Esophagus muscularis mucosa (tissue), 4 donors: ENCODE measurements at regions of chr10 and their contacts with region 1.

Region 1: DNA sequence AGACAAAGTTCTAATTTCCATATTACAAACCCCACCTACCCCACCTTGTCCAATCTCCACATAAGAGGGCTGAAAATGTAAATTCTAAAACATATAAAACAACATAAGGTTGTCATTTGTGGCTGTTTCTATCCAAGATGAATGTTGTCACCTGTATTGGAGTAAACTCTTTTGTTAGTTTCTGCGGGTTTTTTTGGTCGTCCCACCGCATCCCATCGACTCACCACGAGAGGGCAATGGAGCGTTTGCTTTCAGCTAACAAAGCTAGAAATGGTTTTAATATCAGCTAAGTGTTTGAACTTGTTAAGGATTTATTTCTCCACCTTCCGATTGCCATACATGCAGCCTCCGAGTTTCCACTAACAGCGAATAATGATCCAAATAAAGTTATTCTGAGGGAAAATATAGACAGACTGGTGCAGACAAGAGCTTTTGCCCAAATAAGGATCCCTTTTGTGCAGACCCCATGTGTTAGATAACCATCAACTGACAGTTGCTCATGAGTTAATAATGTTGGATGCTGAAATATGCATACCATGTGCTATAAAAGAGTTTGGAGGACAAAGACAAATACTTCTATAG is 137.2 kb downstream of the ARID5B start:
- DNase-seq: no peak
- H3K4me3 ChIP-seq: peak overlapping the region; percentile 24 to 40 (median 34)
- H3K27ac ChIP-seq: peak overlapping the region; percentile 74 to 78 (median 75)
- H3K4me1 ChIP-seq: peaks cover 33 to 62% (median 58%) of the 10 kb centered on the region in 4 donors
- H3K27me3 ChIP-seq: no peaks in the 10 kb centered on the region
- CTCF ChIP-seq: peak; percentile 87 to 89 (median 88)
- EP300 ChIP-seq: no peak
- POLR2A ChIP-seq: no peak

Region 2: GRCh38 chr10:61760943-61761824 is 277.5 kb before region 1 on chr10:
- intact Hi-C with region 1: loop called (anchors 10 kb)
- DNase-seq: no peak
- H3K4me3 ChIP-seq: no peak overlapping the region
- H3K27ac ChIP-seq: peak overlapping the region in 1 of 4 donors; percentile 34
- H3K4me1 ChIP-seq: peaks cover 0 to 19% (median 11%) of the 10 kb centered on the region in 4 donors
- H3K27me3 ChIP-seq: no peaks in the 10 kb centered on the region
- CTCF ChIP-seq: no peak
- EP300 ChIP-seq: no peak
- POLR2A ChIP-seq: no peak

Region 3: GRCh38 chr10:61903221-61903927 is 135.3 kb before region 1 on chr10:
- intact Hi-C with region 1: loop called (anchors 5 kb)
- DNase-seq: no peak
- H3K4me3 ChIP-seq: peak overlapping the region; percentile 66 to 81 (median 76)
- H3K27ac ChIP-seq: peak overlapping the region; percentile 91 to 98 (median 94)
- H3K4me1 ChIP-seq: peaks cover 12 to 49% (median 41%) of the 10 kb centered on the region in 4 donors
- H3K27me3 ChIP-seq: no peaks in the 10 kb centered on the region
- CTCF ChIP-seq: peak; percentile 22 to 33 (median 23)
- EP300 ChIP-seq: no peak
- POLR2A ChIP-seq: no peak

Region 4: DNA sequence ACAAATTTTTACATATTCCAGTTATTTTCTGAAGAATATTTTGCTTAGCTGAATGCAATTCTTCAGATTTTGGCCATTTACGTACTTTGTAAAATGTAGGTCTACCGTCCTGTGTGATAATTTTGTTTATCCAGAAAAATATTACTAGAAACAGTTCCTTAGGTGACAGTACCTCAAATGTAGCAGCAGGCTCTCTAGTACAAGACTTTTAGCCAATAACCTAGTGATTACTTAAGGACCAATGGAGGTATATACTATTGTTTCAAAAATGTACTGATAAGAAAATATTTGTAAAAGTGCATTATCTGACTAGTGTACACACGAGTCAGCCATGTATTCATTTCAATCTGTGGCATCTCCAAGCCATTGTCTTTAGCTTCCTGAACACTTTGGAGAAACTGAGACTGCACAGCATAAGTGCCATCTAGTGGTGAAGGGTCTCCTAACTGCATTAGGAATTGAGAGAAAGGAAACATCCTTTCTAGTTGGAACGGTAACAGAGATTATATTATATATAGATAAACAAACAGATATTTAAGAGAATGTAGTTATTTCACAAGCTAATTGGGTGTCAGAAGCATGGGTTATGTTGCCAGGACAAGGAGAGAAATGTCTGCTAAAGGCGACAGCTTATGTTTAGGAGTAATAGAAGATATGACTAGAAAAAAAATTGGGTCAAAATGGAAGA is 206.2 kb after region 1 on chr10:
- intact Hi-C with region 1: loop called (anchors 2 kb)
- DNase-seq: no peak
- H3K4me3 ChIP-seq: no peak overlapping the region
- H3K27ac ChIP-seq: no peak overlapping the region
- H3K4me1 ChIP-seq: peaks cover 0 to 21% (median 16%) of the 10 kb centered on the region in 4 donors
- H3K27me3 ChIP-seq: no peaks in the 10 kb centered on the region
- CTCF ChIP-seq: peak; percentile 86 to 88 (median 88)
- EP300 ChIP-seq: no peak
- POLR2A ChIP-seq: no peak